PC-3 (cell line): ENCODE measurements at regions of chr4 and their contacts with region 1.

Region 1: GRCh38 chr4:20251796-20252655 is at the start of gene SLIT2:
- DNase-seq: peak; percentile 82
- ATAC-seq: peak; percentile 66
- H3K4me3 ChIP-seq: peak within 1 kb of the TSS; percentile 96
- H3K27ac ChIP-seq: peak within 1 kb of the TSS; percentile 28; the same call in 1 of the 2 replicates
- H3K4me1 ChIP-seq: peaks cover 32% of the 10 kb centered on the region
- H3K27me3 ChIP-seq: no peaks in the 10 kb centered on the region
- CTCF ChIP-seq: no peak
- total RNA-seq, gene SLIT2: 19.1 and 28.7 TPM in 2 replicates

Region 2: DNA sequence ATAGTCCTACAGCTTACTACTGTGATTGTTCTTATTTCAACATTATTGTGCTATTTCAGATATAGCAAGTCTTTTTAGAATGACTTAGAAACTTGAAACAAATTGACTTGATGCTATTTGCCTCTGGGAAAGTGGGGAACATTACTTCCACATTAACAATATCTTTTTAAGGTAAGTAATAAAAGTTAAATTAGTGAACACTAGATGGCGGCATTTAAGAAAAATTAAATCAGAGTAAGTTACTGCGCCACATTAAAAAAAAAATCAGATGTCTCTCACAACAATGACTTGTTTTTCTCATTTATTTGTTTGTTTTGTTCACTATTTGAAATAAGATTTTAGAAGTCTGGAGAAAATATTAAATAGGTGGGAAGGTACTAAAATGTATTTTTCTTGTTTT is 1027.2 kb before region 1 on chr4:
- CTCF ChIA-PET with region 1: no interaction called
- POLR2A ChIA-PET with region 1: no interaction called
- intact Hi-C with region 1: loop called (anchors 2 kb)
- DNase-seq: peak; percentile 66
- ATAC-seq: no peak
- H3K4me3 ChIP-seq: no peak overlapping the region
- H3K27ac ChIP-seq: no peak overlapping the region
- H3K4me1 ChIP-seq: peaks cover 5% of the 10 kb centered on the region; the same call in 1 of the 2 replicates
- H3K27me3 ChIP-seq: no peaks in the 10 kb centered on the region
- CTCF ChIP-seq: peak; percentile 50

Region 3: DNA sequence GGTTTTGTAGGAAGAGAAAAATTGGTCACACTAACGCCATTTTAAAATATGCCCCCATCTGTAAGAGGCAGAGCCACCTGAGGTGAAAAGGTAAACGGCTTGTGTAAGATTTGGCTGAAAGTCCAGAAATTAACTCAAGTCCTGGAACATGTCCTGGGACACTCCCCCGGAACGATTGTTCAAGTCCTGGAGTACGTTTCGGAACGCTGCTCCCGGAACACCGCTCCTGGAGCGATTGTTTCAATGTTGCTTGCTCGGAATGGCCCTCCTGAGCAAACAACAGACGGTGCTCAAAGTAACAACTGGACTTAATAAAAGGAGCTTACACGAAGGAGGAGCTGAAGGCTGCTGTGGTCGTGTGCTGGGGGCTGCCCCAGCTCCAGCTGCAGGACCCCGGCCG is 796.8 kb before region 1 on chr4:
- CTCF ChIA-PET with region 1: interaction called, 9 read pairs
- POLR2A ChIA-PET with region 1: no interaction called
- intact Hi-C with region 1: loop called (anchors 5 kb)
- DNase-seq: peak; percentile 72
- ATAC-seq: peak; percentile 37
- H3K4me3 ChIP-seq: peak overlapping the region; percentile 97
- H3K27ac ChIP-seq: peak overlapping the region; percentile 61
- H3K4me1 ChIP-seq: peaks cover 11% of the 10 kb centered on the region
- H3K27me3 ChIP-seq: no peaks in the 10 kb centered on the region
- CTCF ChIP-seq: no peak

Region 4: GRCh38 chr4:19776021-19776459 is 476.0 kb before region 1 on chr4:
- CTCF ChIA-PET with region 1: no interaction called
- POLR2A ChIA-PET with region 1: no interaction called
- intact Hi-C with region 1: loop called (anchors 2 kb)
- DNase-seq: peak; percentile 96
- ATAC-seq: peak; percentile 93
- H3K4me3 ChIP-seq: peak overlapping the region; percentile 43; the same call in 1 of the 2 replicates
- H3K27ac ChIP-seq: peak overlapping the region; percentile 85
- H3K4me1 ChIP-seq: peaks cover 30% of the 10 kb centered on the region
- H3K27me3 ChIP-seq: no peaks in the 10 kb centered on the region
- CTCF ChIP-seq: no peak

Region 5: GRCh38 chr4:19905024-19905423 is 347.0 kb before region 1 on chr4:
- CTCF ChIA-PET with region 1: no interaction called
- POLR2A ChIA-PET with region 1: no interaction called
- intact Hi-C with region 1: no loop called
- DNase-seq: no peak
- ATAC-seq: no peak
- H3K4me3 ChIP-seq: no peak overlapping the region
- H3K27ac ChIP-seq: no peak overlapping the region
- H3K4me1 ChIP-seq: no peaks in the 10 kb centered on the region
- H3K27me3 ChIP-seq: no peaks in the 10 kb centered on the region
- CTCF ChIP-seq: no peak

Region 6: GRCh38 chr4:20017070-20017776 is 234.8 kb before region 1 on chr4:
- CTCF ChIA-PET with region 1: interaction called, 3 read pairs
- POLR2A ChIA-PET with region 1: no interaction called
- intact Hi-C with region 1: loop called (anchors 5 kb)
- DNase-seq: peak; percentile 61
- ATAC-seq: peak; percentile 27
- H3K4me3 ChIP-seq: no peak overlapping the region
- H3K27ac ChIP-seq: peak overlapping the region; percentile 34
- H3K4me1 ChIP-seq: peaks cover 43% of the 10 kb centered on the region
- H3K27me3 ChIP-seq: no peaks in the 10 kb centered on the region
- CTCF ChIP-seq: no peak

Region 7: GRCh38 chr4:20194124-20195013 is 57.7 kb before region 1 on chr4:
- CTCF ChIA-PET with region 1: interaction called, 5 read pairs
- POLR2A ChIA-PET with region 1: interaction called, 5 read pairs
- intact Hi-C with region 1: loop called (anchors 2 kb)
- DNase-seq: peak; percentile 87
- ATAC-seq: peak; percentile 50
- H3K4me3 ChIP-seq: peak overlapping the region; percentile 46; the same call in 1 of the 2 replicates
- H3K27ac ChIP-seq: peak overlapping the region; percentile 100
- H3K4me1 ChIP-seq: peaks cover 64% of the 10 kb centered on the region
- H3K27me3 ChIP-seq: no peaks in the 10 kb centered on the region
- CTCF ChIP-seq: no peak